GM12878 (cell line): ENCODE measurements at regions of chr9 and their contacts with region 1.

Region 1: DNA sequence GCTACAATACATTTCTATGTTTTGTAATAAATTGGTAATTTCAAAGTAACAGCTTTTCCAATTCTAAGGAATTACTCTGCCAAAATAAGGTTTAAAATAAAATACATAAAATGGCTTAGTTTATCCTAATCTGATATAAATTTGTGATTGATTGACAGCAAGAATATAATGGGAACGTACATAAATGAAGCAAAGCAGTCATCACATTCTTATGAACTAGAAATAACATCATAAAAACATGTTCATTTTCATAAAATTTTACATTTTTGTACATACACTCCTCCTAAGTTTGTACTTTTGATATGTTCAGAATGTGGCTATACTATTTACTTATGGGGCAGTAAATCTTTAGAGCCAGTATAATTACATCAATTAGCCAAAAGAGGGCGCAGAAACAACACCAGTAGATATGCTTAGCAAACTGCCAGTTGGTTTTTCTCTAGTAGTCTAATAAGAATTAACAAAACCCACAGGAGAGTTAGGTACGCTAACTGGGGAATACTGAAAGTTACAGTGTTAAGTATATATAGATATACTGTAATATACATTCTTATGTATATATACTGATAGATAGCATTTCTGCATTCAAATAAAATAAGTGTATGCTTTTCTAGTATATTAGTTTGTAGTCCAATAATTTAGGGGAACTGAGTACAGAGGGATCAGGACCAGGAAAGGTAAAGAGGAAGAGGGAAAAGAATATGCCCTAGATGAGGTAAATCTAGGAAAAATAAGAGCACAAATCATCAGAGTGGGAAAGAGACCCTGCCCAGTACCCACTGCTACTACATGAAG is 76.8 kb downstream of the ZDHHC21 start:
- DNase-seq: no peak
- ATAC-seq: peak; percentile 92
- H3K4me3 ChIP-seq: no peak overlapping the region
- H3K27ac ChIP-seq: no peak overlapping the region
- H3K4me1 ChIP-seq: no peaks in the 10 kb centered on the region
- H3K27me3 ChIP-seq: no peaks in the 10 kb centered on the region
- CTCF ChIP-seq: peak; percentile 53 to 65 (median 57)
- EP300 ChIP-seq: no peak
- POLR2A ChIP-seq: no peak
- RAD21 ChIP-seq: peak; percentile 81

Region 2: GRCh38 chr9:14466429-14466818 is 150.0 kb before region 1 on chr9:
- CTCF ChIA-PET with region 1: interaction called, 5 read pairs
- POLR2A ChIA-PET with region 1: no interaction called
- RAD21 ChIA-PET with region 1: interaction called, 4 read pairs
- SMC1A ChIA-PET with region 1: no interaction called
- in situ Hi-C with region 1: no loop called
- intact Hi-C with region 1: loop called (anchors 5 kb)
- DNase-seq: no peak
- ATAC-seq: no peak
- H3K4me3 ChIP-seq: no peak overlapping the region
- H3K27ac ChIP-seq: no peak overlapping the region
- H3K4me1 ChIP-seq: no peaks in the 10 kb centered on the region
- H3K27me3 ChIP-seq: no peaks in the 10 kb centered on the region; a peak in 1 of 4 replicates
- CTCF ChIP-seq: no peak
- EP300 ChIP-seq: no peak
- POLR2A ChIP-seq: no peak
- RAD21 ChIP-seq: no peak

Region 3: GRCh38 chr9:14652729-14653377 is 36.5 kb after region 1 on chr9:
- CTCF ChIA-PET with region 1: interaction called, 30 read pairs
- POLR2A ChIA-PET with region 1: no interaction called
- RAD21 ChIA-PET with region 1: interaction called, 8 read pairs
- SMC1A ChIA-PET with region 1: interaction called, 8 read pairs
- in situ Hi-C with region 1: no loop called
- intact Hi-C with region 1: no loop called
- DNase-seq: no peak
- ATAC-seq: peak; percentile 68
- H3K4me3 ChIP-seq: no peak overlapping the region
- H3K27ac ChIP-seq: no peak overlapping the region
- H3K4me1 ChIP-seq: no peaks in the 10 kb centered on the region
- H3K27me3 ChIP-seq: no peaks in the 10 kb centered on the region
- CTCF ChIP-seq: peak; percentile 24 to 39 (median 33); a peak in 4 of 6 replicates
- EP300 ChIP-seq: no peak
- POLR2A ChIP-seq: no peak
- RAD21 ChIP-seq: no peak

Region 4: DNA sequence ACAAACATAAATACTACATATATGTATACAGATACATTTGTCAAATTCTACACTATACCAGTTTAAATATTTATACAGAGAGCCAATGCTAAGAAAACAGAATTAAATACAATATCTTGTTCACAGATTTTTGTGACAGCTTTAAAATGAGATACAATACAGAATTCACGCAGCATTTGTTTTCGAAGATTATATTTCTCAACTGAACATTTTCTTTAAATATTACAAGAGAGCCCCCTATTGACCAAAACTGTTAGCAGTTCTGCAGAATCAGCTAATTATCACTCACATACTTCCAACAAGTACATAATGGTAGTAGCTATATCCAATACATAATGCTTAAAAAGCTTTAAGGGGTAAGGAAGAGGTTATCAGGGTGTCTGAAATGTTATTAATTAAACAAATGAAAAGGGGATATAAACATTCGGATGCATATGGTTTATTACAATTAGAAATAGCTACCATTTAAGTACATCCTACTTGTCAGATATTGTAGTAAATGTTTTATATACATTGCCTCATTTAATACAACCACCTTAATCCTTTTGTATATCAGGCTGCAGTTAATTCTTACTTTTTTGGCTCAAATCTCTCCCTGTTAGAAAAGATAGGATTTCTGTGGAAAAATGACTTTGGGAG is 45.2 kb after region 1 on chr9:
- CTCF ChIA-PET with region 1: interaction called, 20 read pairs
- POLR2A ChIA-PET with region 1: no interaction called
- RAD21 ChIA-PET with region 1: interaction called, 7 read pairs
- SMC1A ChIA-PET with region 1: interaction called, 16 read pairs
- in situ Hi-C with region 1: no loop called
- intact Hi-C with region 1: no loop called
- DNase-seq: no peak
- ATAC-seq: peak; percentile 65
- H3K4me3 ChIP-seq: no peak overlapping the region
- H3K27ac ChIP-seq: no peak overlapping the region
- H3K4me1 ChIP-seq: no peaks in the 10 kb centered on the region
- H3K27me3 ChIP-seq: no peaks in the 10 kb centered on the region
- CTCF ChIP-seq: peak; percentile 35 to 48 (median 41); a peak in 4 of 6 replicates
- EP300 ChIP-seq: no peak
- POLR2A ChIP-seq: no peak
- RAD21 ChIP-seq: peak; percentile 37; the same call in 1 of the 2 replicates

Region 5: DNA sequence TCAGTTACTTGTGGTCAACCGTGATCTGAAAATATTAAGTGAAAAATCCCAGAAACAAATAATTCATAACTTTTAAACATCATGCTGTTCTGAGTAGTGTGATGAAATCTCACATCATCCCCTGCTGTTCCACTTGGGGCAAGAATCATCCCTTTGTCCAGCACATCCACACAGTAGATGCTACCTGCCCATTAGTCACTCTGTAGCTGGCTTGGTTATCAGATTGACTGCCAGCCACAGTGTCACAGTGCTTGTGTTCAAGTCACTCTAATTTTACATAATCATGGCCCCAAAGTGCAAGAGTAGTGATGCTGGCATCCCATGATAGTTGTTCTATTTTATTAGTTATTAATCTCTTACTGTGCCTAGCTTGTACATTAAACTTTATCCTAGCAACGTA is 145.2 kb after region 1 on chr9:
- CTCF ChIA-PET with region 1: interaction called, 135 read pairs
- POLR2A ChIA-PET with region 1: interaction called, 4 read pairs
- RAD21 ChIA-PET with region 1: interaction called, 35 read pairs
- SMC1A ChIA-PET with region 1: interaction called, 34 read pairs
- in situ Hi-C with region 1: loop called (anchors 5 kb)
- intact Hi-C with region 1: no loop called
- DNase-seq: no peak
- ATAC-seq: no peak
- H3K4me3 ChIP-seq: no peak overlapping the region
- H3K27ac ChIP-seq: no peak overlapping the region
- H3K4me1 ChIP-seq: no peaks in the 10 kb centered on the region
- H3K27me3 ChIP-seq: no peaks in the 10 kb centered on the region; a peak in 1 of 4 replicates
- CTCF ChIP-seq: no peak
- EP300 ChIP-seq: no peak
- POLR2A ChIP-seq: no peak
- RAD21 ChIP-seq: no peak

Region 6: DNA sequence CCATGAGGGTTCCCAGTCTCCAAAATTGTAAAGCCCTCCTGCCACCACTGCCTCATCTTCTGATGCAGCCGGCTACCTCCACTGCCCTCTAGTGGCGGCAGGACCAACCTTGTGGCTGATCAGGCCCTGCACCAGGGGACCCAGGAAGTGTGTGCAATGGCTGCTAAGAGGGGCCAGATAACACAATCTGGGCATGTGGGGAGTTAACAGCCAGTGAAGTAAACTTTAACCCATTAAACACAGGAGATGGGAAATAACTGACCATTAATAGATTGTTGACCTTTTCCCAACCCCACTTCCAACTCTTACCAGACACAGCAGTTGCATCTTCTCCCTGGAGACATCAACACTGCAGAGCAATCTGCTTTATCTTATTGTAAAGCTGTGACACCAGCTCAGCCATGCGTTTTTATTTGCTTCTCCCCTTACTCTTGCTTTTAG is 230.5 kb after region 1 on chr9:
- CTCF ChIA-PET with region 1: interaction called, 4 read pairs
- POLR2A ChIA-PET with region 1: no interaction called
- RAD21 ChIA-PET with region 1: no interaction called
- SMC1A ChIA-PET with region 1: no interaction called
- in situ Hi-C with region 1: no loop called
- intact Hi-C with region 1: loop called (anchors 2 kb)
- DNase-seq: no peak
- ATAC-seq: peak; percentile 100
- H3K4me3 ChIP-seq: no peak overlapping the region
- H3K27ac ChIP-seq: no peak overlapping the region
- H3K4me1 ChIP-seq: no peaks in the 10 kb centered on the region
- H3K27me3 ChIP-seq: peaks cover 0 to 2% of the 10 kb centered on the region in 2 experiments; a peak in 1 of 4 replicates
- CTCF ChIP-seq: peak; percentile 69 to 91 (median 87)
- EP300 ChIP-seq: no peak
- POLR2A ChIP-seq: no peak
- RAD21 ChIP-seq: peak; percentile 47